ENCODE measurements at regions of chr15 and their contacts with region 1.

Region 1: GRCh38 chr15:101288908-101289513 is 6.0 kb downstream of the SNRPA1 start:
- DNase-seq: no peak
- H3K4me3 ChIP-seq: no peak overlapping the region
- H3K27ac ChIP-seq: no peak overlapping the region
- H3K4me1 ChIP-seq: peaks cover 0 to 15% of the 10 kb centered on the region in 2 donors
- H3K27me3 ChIP-seq: no peaks in the 10 kb centered on the region
- CTCF ChIP-seq: peak in 2 of 3 donors; percentile 38 to 62
- POLR2A ChIP-seq: no peak

Region 2: GRCh38 chr15:100373120-100373896 is 915.7 kb before region 1 on chr15:
- intact Hi-C with region 1: loop called (anchors 10 kb)
- DNase-seq: no peak
- H3K4me3 ChIP-seq: peak overlapping the region; percentile 57 to 75 (median 58)
- H3K27ac ChIP-seq: peak overlapping the region; percentile 64 to 73
- H3K4me1 ChIP-seq: no peaks in the 10 kb centered on the region
- H3K27me3 ChIP-seq: peaks cover 0 to 5% of the 10 kb centered on the region in 2 donors
- CTCF ChIP-seq: no peak
- POLR2A ChIP-seq: no peak

Region 3: GRCh38 chr15:101307048-101307896 is 18.3 kb after region 1 on chr15:
- intact Hi-C with region 1: no loop called
- DNase-seq: no peak
- H3K4me3 ChIP-seq: no peak overlapping the region
- H3K27ac ChIP-seq: no peak overlapping the region
- H3K4me1 ChIP-seq: no peaks in the 10 kb centered on the region
- H3K27me3 ChIP-seq: no peaks in the 10 kb centered on the region
- CTCF ChIP-seq: no peak
- POLR2A ChIP-seq: no peak